AG04449 (cell line): ENCODE measurements at regions of chr3 and their contacts with region 1.

Region 1: DNA sequence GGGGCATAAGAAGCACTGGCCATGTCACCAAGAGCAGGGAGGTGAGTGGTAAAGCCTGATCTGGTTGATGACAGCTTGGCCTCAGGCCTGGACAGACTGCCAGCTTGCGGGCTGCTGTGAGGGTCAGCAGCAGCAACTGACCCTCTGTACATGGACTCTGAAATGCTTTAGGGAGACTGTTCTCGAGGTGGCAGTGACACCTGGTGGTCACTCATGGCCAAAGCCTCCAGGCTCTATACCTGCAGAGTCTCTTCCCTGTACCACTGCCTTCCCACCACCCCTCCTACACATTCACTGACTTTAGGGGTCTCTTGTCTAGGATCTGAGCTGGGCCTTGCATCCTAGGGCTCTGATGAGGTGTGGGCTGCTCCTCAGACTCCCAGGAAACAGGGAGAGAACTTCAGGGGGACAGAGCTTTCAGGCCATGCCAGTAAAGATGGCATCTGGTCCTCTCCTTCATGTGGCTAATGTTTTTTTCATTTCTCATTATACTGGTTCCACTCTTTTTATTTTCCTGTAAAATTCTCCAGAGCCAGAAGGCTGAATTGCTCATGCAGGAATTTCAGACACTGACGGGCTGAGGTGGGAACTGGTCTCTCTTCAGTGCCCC is 17.2 kb upstream of the TIMP4 start:
- DNase-seq: no peak
- H3K4me3 ChIP-seq: no peak overlapping the region
- CTCF ChIP-seq: peak; percentile 84

Region 2: DNA sequence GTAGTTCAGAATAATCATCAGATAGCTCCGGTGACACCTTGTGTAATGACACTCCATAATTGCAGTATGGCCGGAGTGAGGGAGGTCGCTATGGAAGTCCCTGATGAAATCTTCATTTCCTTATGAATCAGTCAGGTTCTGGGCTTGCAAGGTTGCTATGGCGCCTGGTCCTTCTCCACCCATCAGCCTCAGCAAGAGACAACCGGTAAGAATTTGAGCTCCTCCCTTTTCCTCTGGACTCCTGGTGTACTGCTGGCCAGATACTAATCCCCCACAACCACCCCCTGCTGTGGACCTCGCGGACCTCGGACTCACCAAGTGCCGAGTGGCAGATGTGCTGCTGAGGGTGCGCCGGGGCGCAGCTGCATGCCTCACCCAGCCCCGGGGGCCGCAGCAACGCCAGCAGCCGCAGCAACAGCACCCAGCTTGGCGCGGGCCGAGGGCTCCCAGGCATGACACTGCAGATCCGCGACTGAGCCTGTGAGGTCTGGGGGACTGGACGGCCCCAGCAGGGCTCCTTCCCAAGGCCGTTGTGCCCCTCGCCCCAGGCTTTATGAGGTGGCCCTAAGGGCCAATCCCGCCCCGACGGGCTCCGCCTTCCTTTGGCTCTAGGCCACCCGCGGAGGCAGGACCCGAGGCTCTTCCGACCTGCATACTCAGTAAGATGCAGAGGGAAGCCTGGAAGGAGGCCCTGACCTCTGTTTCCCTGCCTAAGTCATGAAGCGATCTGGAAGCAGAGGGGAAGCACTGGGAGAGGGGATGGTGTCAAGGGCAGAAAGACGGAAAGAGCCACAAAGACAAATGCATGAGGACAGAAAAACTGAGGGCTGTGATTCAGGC is 17.3 kb before region 1 on chr3 and contains the start of gene TIMP4:
- CTCF ChIA-PET with region 1: interaction called, 15 read pairs
- POLR2A ChIA-PET with region 1: no interaction called
- DNase-seq: no peak
- H3K4me3 ChIP-seq: peak within 1 kb of the TSS; percentile 37
- CTCF ChIP-seq: no peak

Region 3: DNA sequence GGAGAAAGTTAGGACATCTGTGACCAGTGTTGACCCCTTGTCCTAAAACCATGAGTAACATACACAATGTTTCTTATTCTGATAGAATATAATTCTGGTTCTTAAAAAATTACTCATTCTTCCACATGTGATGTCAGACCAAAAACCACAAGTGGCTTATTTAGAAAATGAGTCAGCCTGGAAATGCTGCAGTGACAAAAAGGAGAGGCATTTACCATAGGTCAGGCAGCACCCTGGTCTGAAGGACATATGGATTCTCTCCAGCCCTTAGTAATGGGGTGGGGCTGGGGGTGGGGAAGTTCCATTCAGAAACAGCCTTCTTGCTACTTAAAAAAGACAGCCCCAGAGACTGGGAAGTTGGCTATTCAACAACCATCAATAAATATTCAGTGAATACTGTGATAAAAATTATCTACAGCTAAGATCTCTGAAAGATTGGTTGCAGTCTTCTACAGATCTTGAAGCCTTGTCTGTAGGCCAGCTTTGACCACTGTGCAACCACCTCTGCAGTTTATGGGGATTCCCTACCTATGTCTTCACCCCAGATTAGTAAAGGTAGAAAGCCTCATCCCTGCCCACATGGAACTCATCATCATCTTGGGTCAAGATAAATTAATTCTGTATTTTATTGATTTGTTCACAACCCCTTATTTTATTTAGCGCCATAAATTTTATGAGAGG is 17.7 kb after region 1 on chr3:
- CTCF ChIA-PET with region 1: interaction called, 124 read pairs
- POLR2A ChIA-PET with region 1: no interaction called
- DNase-seq: peak; percentile 97
- H3K4me3 ChIP-seq: no peak overlapping the region
- CTCF ChIP-seq: no peak

Region 4: GRCh38 chr3:12476238-12476897 is 300.4 kb after region 1 on chr3:
- CTCF ChIA-PET with region 1: interaction called, 76 read pairs
- POLR2A ChIA-PET with region 1: no interaction called
- DNase-seq: no peak
- H3K4me3 ChIP-seq: no peak overlapping the region
- CTCF ChIP-seq: no peak